ENCODE measurements at regions of chr20 and their contacts with region 1.

Region 1: GRCh38 chr20:41161886-41162285 is 24.5 kb downstream of the PLCG1 start:
- DNase-seq: peak in 1 of 2 donors; percentile 49
- ATAC-seq: no peak
- H3K4me3 ChIP-seq: no peak overlapping the region
- H3K4me3 Mint-ChIP-seq: no peak overlapping the region
- H3K27ac ChIP-seq: no peak overlapping the region
- H3K27ac Mint-ChIP-seq: peak overlapping the region; percentile 34 to 53
- H3K4me1 ChIP-seq: peaks cover 62% of the 10 kb centered on the region
- H3K4me1 Mint-ChIP-seq: peaks cover 55 to 59% of the 10 kb centered on the region in 2 donors
- H3K27me3 ChIP-seq: no peaks in the 10 kb centered on the region
- H3K27me3 Mint-ChIP-seq: peaks cover 0 to 5% of the 10 kb centered on the region in 2 donors
- CTCF ChIP-seq: no peak

Region 2: DNA sequence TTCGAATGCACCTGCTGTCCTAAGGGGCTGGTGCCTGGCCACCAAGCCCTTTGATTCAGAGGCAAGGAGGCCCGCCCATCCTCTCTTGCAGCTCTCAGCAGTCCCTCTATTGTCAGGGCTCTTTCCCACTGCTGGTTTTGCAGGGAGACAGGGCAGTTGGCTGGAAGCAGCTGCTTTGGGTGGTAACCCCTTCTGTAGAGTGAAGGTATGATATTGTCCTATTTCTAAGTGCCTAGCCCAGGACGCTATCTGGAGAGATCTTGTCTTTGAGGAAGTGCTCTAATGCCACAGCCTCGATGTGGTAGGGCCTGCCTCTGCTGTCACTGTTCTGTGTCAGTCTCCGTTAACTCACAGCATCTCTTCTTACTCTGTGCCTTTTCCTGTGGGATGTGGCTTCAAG is 19.0 kb before region 1 on chr20:
- intact Hi-C with region 1: loop called (anchors 2 kb)
- DNase-seq: peak in 1 of 2 donors; percentile 73
- ATAC-seq: peak; percentile 55 to 68 (median 64)
- H3K4me3 ChIP-seq: no peak overlapping the region
- H3K4me3 Mint-ChIP-seq: peak overlapping the region; percentile 86
- H3K27ac ChIP-seq: peak overlapping the region; percentile 37
- H3K27ac Mint-ChIP-seq: peak overlapping the region; percentile 93 to 94
- H3K4me1 ChIP-seq: peaks cover 100% of the 10 kb centered on the region
- H3K4me1 Mint-ChIP-seq: peaks cover 97 to 100% of the 10 kb centered on the region in 2 donors
- H3K27me3 ChIP-seq: no peaks in the 10 kb centered on the region
- H3K27me3 Mint-ChIP-seq: no peaks in the 10 kb centered on the region
- CTCF ChIP-seq: no peak

Region 3: DNA sequence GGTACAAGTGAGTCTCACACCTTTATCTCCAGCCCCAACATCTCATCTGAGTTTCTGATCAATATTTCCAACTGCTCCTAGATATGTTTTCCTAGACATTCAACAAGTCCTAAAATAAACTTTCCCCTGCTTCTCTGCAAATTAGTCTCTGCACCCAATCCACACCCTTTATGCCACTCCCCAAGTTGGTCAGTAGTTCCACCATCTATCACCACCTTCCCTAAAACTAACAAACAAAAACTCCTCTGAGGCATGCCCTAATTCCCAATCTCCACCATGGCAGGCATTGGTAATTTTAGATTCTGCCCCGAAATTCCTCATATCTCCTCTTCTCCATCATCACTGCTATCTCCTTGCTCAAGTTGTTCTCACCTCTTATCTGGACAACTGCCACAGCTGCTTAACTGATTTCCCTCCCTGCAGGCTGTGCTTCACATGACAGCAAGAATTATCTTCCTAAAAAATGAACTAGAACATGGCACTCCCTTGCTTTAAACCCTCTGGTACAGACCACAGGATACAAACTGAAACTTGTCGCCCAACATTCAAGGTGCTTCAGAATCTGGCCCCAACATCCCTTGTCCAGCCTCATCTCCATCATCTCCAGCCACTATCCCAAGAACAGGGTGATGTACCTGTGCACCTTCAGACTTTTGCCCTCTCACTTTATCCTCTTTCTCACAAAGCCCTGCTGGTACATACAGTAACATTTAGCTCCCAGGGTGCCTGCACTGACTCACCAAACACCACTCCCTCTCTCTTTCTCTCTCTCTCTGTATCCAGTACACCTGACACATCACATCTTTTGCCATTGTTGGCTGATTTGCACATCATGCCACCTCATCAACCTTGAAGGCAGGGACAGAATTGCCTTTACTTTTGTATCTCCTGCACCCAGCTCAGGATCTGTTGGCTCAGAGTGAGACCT is 100.2 kb after region 1 on chr20:
- intact Hi-C with region 1: no loop called
- DNase-seq: no peak
- ATAC-seq: no peak
- H3K4me3 ChIP-seq: no peak overlapping the region
- H3K4me3 Mint-ChIP-seq: no peak overlapping the region
- H3K27ac ChIP-seq: no peak overlapping the region
- H3K27ac Mint-ChIP-seq: no peak overlapping the region
- H3K4me1 ChIP-seq: no peaks in the 10 kb centered on the region
- H3K4me1 Mint-ChIP-seq: no peaks in the 10 kb centered on the region
- H3K27me3 ChIP-seq: no peaks in the 10 kb centered on the region
- H3K27me3 Mint-ChIP-seq: no peaks in the 10 kb centered on the region
- CTCF ChIP-seq: no peak